ENCODE measurements at regions of chr2 and their contacts with region 1.

Region 1: GRCh38 chr2:25951071-25951547 is 31.2 kb downstream of the KIF3C start:
- DNase-seq: peak; percentile 39 to 76 (median 57)
- ATAC-seq: peak; percentile 95
- H3K4me3 ChIP-seq: no peak overlapping the region
- H3K4me3 Mint-ChIP-seq: no peak overlapping the region
- H3K27ac ChIP-seq: no peak overlapping the region
- H3K27ac Mint-ChIP-seq: peak overlapping the region in 1 of 9 donors; percentile 18
- H3K4me1 ChIP-seq: no peaks in the 10 kb centered on the region
- H3K4me1 Mint-ChIP-seq: peaks cover 0 to 4% (median 0%) of the 10 kb centered on the region in 7 donors
- H3K27me3 ChIP-seq: no peaks in the 10 kb centered on the region
- H3K27me3 Mint-ChIP-seq: no peaks in the 10 kb centered on the region

Region 2: DNA sequence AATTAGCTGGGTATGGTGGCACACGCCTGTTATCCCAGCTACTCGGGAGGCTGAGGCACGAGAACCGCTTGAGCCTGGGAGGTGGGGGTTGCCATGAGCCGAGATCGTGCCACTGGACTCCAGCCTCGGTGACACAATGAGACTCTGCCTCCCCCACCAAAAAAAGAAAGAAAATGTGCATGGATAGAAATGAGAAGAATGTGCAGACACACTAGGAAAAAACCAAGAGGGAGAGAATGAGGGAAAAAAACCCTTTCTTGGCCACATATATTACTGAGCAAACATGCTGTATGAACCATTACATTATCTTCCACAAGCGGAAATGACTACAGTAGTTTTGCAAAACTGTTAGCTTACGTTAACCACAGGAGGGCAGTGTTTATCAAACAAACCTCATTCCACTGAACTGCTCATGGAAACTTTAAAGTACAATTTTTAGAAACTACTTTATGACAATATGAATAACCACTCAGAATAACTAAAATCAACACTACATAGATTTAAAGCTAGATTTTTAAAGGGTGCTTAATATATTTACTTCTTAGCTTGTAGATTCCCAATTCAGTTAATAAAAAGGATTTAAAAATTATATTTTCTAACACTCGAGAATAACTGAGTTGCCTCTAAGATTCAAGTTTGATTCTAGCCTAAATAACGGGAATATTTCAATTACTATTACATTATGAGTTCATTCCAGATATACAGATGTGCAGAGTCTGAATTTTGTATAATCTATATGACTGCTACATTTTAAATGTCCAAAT is 99.2 kb before region 1 on chr2:
- CTCF ChIA-PET with region 1: interaction called, 33 read pairs
- POLR2A ChIA-PET with region 1: no interaction called
- intact Hi-C with region 1: loop called (anchors 1 kb)
- DNase-seq: peak in 8 of 9 donors; percentile 34 to 77 (median 67)
- ATAC-seq: peak; percentile 99
- H3K4me3 ChIP-seq: no peak overlapping the region
- H3K4me3 Mint-ChIP-seq: peak overlapping the region in 9 of 10 donors; percentile 43 to 83 (median 74)
- H3K27ac ChIP-seq: peak overlapping the region; percentile 17
- H3K27ac Mint-ChIP-seq: peak overlapping the region in 6 of 9 donors; percentile 21 to 82 (median 50)
- H3K4me1 ChIP-seq: peaks cover 10 to 22% of the 10 kb centered on the region in 2 donors
- H3K4me1 Mint-ChIP-seq: peaks cover 38 to 55% (median 48%) of the 10 kb centered on the region in 7 donors
- H3K27me3 ChIP-seq: no peaks in the 10 kb centered on the region
- H3K27me3 Mint-ChIP-seq: no peaks in the 10 kb centered on the region

Region 3: DNA sequence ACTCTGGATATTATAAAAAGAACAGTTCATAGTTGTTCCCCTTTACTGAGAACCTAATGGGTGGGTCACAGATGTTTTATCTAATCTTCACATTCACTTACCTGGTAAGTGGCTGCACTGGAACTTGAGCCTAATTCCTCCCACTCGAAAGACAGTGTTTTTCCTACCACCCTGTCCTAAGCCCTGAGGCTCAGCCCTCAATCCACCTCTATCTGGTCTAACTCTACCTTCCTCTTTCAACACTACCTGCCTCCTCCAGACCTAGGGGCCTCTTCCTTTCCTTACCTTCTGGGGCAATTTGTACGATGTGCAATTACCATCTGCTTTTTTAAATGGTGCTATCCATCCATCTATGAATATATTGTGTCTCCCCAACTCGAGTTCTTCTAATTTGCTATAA is 40.9 kb after region 1 on chr2:
- CTCF ChIA-PET with region 1: interaction called, 6 read pairs
- POLR2A ChIA-PET with region 1: no interaction called
- intact Hi-C with region 1: loop called (anchors 1 kb)
- DNase-seq: no peak
- ATAC-seq: peak; percentile 23
- H3K4me3 ChIP-seq: no peak overlapping the region
- H3K4me3 Mint-ChIP-seq: peak overlapping the region in 4 of 10 donors; percentile 28 to 82 (median 54)
- H3K27ac ChIP-seq: no peak overlapping the region
- H3K27ac Mint-ChIP-seq: peak overlapping the region in 7 of 9 donors; percentile 2 to 91 (median 48)
- H3K4me1 ChIP-seq: no peaks in the 10 kb centered on the region
- H3K4me1 Mint-ChIP-seq: peaks cover 0 to 18% (median 12%) of the 10 kb centered on the region in 7 donors
- H3K27me3 ChIP-seq: no peaks in the 10 kb centered on the region
- H3K27me3 Mint-ChIP-seq: peaks cover 0 to 17% (median 0%) of the 10 kb centered on the region in 5 donors

Region 4: DNA sequence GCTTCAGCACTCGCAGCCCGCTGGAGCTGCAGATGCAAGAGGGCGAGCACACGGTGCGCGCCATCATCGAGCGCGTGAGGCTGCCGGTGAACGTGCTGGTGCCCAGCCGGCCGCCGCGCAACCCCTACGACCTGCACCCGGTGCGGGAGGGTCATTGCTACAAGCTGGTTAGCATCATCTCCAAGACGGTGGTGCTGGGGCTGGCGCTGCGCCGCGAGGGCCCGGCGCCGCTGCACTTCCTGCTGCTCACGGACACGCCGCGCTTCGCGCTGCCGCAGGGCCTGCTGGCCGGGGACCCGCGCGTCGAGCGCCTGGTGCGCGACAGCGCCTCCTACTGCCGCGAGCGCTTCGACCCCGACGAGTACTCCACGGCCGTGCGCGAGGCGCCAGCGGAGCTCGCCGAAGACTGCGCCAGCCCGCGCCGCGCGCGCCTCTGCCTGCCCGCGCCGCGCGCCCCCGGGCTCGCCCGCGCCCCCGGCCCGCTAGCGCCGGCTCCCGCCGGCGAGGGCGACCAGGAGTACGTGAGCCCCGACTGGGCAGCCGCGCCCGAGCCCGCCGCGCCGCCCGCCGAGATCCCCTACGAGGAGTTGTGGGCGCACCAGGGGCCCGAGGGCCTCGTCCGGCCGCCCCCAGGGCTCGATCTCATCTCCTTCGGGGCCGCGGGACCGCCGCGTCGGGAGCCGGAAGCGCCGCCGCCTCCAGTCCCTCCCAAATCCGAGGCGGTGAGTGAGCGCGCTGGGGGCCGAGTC is 233.6 kb after region 1 on chr2:
- CTCF ChIA-PET with region 1: no interaction called
- POLR2A ChIA-PET with region 1: no interaction called
- intact Hi-C with region 1: loop called in 1 of 2 experiments (anchors 1 kb)
- DNase-seq: peak; percentile 82 to 91 (median 88)
- ATAC-seq: peak; percentile 98
- H3K4me3 ChIP-seq: peak overlapping the region; percentile 68
- H3K4me3 Mint-ChIP-seq: peak overlapping the region; percentile 79 to 91 (median 85)
- H3K27ac ChIP-seq: peak overlapping the region; percentile 71
- H3K27ac Mint-ChIP-seq: peak overlapping the region in 7 of 9 donors; percentile 25 to 90 (median 67)
- H3K4me1 ChIP-seq: peaks cover 5 to 8% of the 10 kb centered on the region in 2 donors
- H3K4me1 Mint-ChIP-seq: peaks cover 6 to 30% (median 23%) of the 10 kb centered on the region in 7 donors
- H3K27me3 ChIP-seq: no peaks in the 10 kb centered on the region
- H3K27me3 Mint-ChIP-seq: peaks cover 11 to 23% (median 15%) of the 10 kb centered on the region in 5 donors

Region 5: GRCh38 chr2:26745609-26746327 is 794.7 kb after region 1 on chr2:
- CTCF ChIA-PET with region 1: no interaction called
- POLR2A ChIA-PET with region 1: no interaction called
- intact Hi-C with region 1: loop called in 1 of 2 experiments (anchors 1 kb)
- DNase-seq: peak; percentile 42 to 75 (median 64)
- ATAC-seq: peak; percentile 84
- H3K4me3 ChIP-seq: no peak overlapping the region
- H3K4me3 Mint-ChIP-seq: no peak overlapping the region
- H3K27ac ChIP-seq: no peak overlapping the region
- H3K27ac Mint-ChIP-seq: no peak overlapping the region
- H3K4me1 ChIP-seq: no peaks in the 10 kb centered on the region
- H3K4me1 Mint-ChIP-seq: peaks cover 0 to 9% (median 4%) of the 10 kb centered on the region in 7 donors
- H3K27me3 ChIP-seq: no peaks in the 10 kb centered on the region
- H3K27me3 Mint-ChIP-seq: peaks cover 0 to under 1% (median 0%) of the 10 kb centered on the region in 5 donors

Measured in naive thymus-derived CD4-positive, alpha-beta T cell (primary cell).